Naive thymus-derived CD4-positive, alpha-beta T cell (primary cell): ENCODE measurements at regions of chr19 and their contacts with region 1.

Region 1: GRCh38 chr19:10870955-10871603 is at the start of gene CARM1:
- DNase-seq: peak; percentile 99 to 100 (median 99)
- ATAC-seq: peak; percentile 92
- H3K4me3 ChIP-seq: peak within 1 kb of the TSS; percentile 67
- H3K4me3 Mint-ChIP-seq: peak within 1 kb of the TSS; percentile 79 to 91 (median 86)
- H3K27ac ChIP-seq: peak within 1 kb of the TSS; percentile 74
- H3K27ac Mint-ChIP-seq: peak within 1 kb of the TSS; percentile 74 to 96 (median 88)
- H3K4me1 ChIP-seq: peaks cover 10 to 14% of the 10 kb centered on the region in 2 donors
- H3K4me1 Mint-ChIP-seq: peaks cover 5 to 33% (median 25%) of the 10 kb centered on the region in 7 donors
- H3K27me3 ChIP-seq: no peaks in the 10 kb centered on the region
- H3K27me3 Mint-ChIP-seq: no peaks in the 10 kb centered on the region
- total RNA-seq, gene CARM1: 21.3 to 43.1 (median 27.2) TPM

Region 2: DNA sequence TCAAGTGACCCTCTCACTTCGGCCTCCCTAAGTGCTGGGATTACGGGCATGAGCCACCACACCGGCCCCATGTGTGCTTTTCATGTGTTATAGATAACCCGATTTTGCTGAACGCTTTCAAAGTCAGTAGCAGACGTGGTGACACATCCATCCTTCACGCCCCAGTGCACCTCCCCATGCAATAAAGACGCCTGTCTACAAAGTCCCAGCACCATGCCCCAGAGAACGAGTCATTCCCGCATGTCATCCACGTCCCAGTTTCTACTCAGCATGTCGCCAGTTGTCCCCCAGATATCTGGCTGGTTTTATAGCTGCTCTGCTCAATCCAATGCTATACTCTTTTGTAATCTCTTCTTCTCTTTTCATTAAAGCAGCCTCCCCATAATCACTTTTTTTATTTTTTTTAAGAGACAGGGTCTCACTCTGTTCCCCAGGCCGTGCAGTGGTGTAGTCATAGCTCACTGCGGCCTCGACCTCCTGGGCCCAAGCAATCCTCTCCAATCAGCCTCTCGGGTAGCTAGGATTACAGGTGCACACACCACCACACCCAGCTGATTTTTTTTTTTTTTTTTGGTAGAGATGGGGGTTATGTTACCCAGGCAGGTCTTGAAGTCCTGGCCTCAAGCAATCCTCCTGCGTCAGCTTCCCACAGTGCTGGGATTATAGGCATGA is 110.7 kb before region 1 on chr19:
- CTCF ChIA-PET with region 1: no interaction called
- POLR2A ChIA-PET with region 1: no interaction called
- intact Hi-C with region 1: loop called in 1 of 2 experiments (anchors 2 kb)
- DNase-seq: peak in 1 of 9 donors; percentile 57
- ATAC-seq: no peak
- H3K4me3 ChIP-seq: no peak overlapping the region
- H3K4me3 Mint-ChIP-seq: peak overlapping the region; percentile 60 to 86 (median 82)
- H3K27ac ChIP-seq: peak overlapping the region; percentile 70
- H3K27ac Mint-ChIP-seq: peak overlapping the region; percentile 83 to 99 (median 94)
- H3K4me1 ChIP-seq: peaks cover 62 to 79% of the 10 kb centered on the region in 2 donors
- H3K4me1 Mint-ChIP-seq: peaks cover 69 to 92% (median 84%) of the 10 kb centered on the region in 7 donors
- H3K27me3 ChIP-seq: no peaks in the 10 kb centered on the region
- H3K27me3 Mint-ChIP-seq: peaks cover 0 to 2% (median 0%) of the 10 kb centered on the region in 5 donors

Region 3: DNA sequence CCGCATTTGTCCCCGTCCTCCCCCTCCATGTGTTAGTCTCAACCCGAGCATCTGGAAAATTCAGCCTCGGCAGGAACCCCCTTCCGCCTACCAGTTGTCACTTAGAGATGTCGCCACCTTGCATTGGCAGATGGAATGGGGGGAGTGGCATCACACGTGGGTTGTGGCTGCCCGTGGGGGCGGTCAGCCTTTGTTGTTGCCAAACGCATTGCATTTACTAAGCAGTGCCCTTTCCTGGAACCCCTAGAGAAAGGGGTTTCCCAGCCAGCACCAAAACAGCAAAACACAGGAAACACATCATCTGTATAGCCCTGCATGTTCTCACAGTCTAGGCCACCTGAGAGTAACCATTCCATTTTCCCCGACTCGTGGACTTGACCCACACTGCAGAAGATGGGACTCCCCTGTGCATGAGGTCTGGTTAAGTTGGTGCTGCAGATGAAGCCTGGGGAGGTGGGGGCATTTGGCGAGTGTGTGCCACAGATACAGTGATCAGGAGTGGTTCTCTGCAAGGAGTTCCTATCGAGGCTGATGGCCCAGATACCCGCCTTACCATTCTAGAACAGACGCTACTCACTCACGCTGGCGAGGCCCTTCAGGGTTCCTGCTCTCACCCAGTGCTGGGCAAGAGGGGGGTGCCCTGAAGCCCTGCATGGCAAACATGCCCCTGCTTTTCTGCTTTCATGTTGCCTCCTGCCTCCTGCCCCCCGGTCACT is 73.4 kb before region 1 on chr19:
- CTCF ChIA-PET with region 1: no interaction called
- POLR2A ChIA-PET with region 1: no interaction called
- intact Hi-C with region 1: loop called in 1 of 2 experiments (anchors 1 kb)
- DNase-seq: peak; percentile 27 to 89 (median 64)
- ATAC-seq: peak; percentile 90
- H3K4me3 ChIP-seq: peak overlapping the region; percentile 39
- H3K4me3 Mint-ChIP-seq: peak overlapping the region; percentile 56 to 82 (median 74)
- H3K27ac ChIP-seq: peak overlapping the region; percentile 80
- H3K27ac Mint-ChIP-seq: peak overlapping the region; percentile 93 to 97 (median 94)
- H3K4me1 ChIP-seq: peaks cover 25 to 39% of the 10 kb centered on the region in 2 donors
- H3K4me1 Mint-ChIP-seq: peaks cover 8 to 51% (median 16%) of the 10 kb centered on the region in 7 donors
- H3K27me3 ChIP-seq: no peaks in the 10 kb centered on the region
- H3K27me3 Mint-ChIP-seq: no peaks in the 10 kb centered on the region

Region 4: DNA sequence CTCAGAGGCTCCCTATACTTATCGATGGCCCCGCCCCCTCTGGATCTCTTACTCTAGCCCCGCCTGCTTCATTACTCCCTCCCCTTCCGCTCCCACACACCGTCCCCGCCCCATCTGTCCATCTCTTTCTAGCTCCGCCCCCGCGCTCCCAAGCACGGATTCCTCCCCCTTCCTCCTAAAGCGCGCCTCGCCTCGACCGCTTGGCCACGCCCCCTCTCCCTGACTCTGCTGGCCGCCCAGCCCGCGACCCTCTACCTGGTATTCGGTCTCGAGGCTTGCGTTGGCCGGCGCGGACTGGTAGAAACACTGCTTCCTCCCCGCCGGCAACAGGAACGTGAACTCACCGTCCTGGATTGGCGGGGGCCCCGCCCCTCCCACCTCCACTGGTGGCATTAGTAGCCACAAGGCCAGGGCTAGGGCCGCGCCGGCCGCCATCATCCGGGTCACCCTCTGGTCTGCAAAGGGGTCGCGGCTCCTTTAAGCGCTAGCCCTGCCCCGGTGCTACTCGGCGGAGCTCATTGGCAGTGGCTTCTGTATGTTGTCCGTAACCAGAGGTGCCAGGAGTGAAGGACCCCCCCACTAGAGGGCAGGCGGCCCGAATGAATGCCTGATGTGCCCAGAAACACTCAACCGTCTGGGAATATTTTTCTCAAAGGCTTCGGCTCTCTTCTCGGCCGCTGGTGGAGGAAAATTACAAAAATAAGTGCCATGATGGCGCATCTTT is 35.2 kb before region 1 on chr19 and contains the start of gene TMED1:
- CTCF ChIA-PET with region 1: interaction called, 4 read pairs
- POLR2A ChIA-PET with region 1: interaction called, 7 read pairs
- intact Hi-C with region 1: loop called (anchors 1 kb)
- DNase-seq: peak; percentile 81 to 97 (median 93)
- ATAC-seq: peak; percentile 92
- H3K4me3 ChIP-seq: peak within 1 kb of the TSS; percentile 98
- H3K4me3 Mint-ChIP-seq: peak within 1 kb of the TSS; percentile 82 to 99 (median 96)
- H3K27ac ChIP-seq: peak within 1 kb of the TSS; percentile 93
- H3K27ac Mint-ChIP-seq: peak within 1 kb of the TSS; percentile 98 to 100 (median 99)
- H3K4me1 ChIP-seq: peaks cover 8 to 13% of the 10 kb centered on the region in 2 donors
- H3K4me1 Mint-ChIP-seq: peaks cover 12 to 20% (median 15%) of the 10 kb centered on the region in 7 donors
- H3K27me3 ChIP-seq: no peaks in the 10 kb centered on the region
- H3K27me3 Mint-ChIP-seq: no peaks in the 10 kb centered on the region
- total RNA-seq, gene TMED1: 7.6 to 12.8 (median 9.9) TPM

Region 5: DNA sequence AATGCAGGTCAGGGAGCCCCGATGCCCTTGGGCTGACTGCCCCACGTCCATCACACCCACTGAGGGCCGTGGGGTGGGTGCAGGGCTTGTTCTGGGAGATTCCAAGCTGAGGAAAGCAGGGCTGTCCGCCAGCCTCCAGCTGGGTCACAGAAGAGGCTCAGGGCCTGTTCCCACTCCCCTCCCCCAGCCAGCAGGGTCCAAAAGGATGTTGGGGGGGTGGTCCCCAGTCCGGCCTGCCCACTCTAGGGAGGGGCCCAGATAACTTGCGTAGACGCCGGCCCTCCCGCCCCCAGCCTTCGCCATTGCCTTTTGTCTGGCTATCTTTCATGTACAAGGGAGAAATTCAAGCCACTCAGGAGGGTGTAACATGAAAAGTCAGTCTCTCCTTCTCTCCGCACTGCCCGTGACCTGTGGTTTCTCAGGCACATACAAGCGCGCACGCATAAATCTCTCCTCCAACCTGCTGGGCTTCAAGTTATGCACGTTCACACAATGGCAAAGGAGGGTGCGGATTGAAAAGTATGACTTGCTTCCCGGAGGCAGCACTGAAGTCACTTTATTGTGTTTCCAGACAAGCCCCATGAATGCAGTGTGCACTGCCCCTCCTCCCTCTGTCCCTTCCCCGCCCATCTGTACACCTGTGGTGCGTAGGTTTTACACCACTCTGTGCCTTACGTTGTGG is 20.5 kb after region 1 on chr19:
- CTCF ChIA-PET with region 1: no interaction called
- POLR2A ChIA-PET with region 1: no interaction called
- intact Hi-C with region 1: no loop called
- DNase-seq: no peak
- ATAC-seq: no peak
- H3K4me3 ChIP-seq: no peak overlapping the region
- H3K4me3 Mint-ChIP-seq: no peak overlapping the region
- H3K27ac ChIP-seq: no peak overlapping the region
- H3K27ac Mint-ChIP-seq: peak overlapping the region in 1 of 9 donors; percentile 21
- H3K4me1 ChIP-seq: no peaks in the 10 kb centered on the region
- H3K4me1 Mint-ChIP-seq: peaks cover 8 to 26% (median 12%) of the 10 kb centered on the region in 7 donors
- H3K27me3 ChIP-seq: no peaks in the 10 kb centered on the region
- H3K27me3 Mint-ChIP-seq: no peaks in the 10 kb centered on the region

Region 6: DNA sequence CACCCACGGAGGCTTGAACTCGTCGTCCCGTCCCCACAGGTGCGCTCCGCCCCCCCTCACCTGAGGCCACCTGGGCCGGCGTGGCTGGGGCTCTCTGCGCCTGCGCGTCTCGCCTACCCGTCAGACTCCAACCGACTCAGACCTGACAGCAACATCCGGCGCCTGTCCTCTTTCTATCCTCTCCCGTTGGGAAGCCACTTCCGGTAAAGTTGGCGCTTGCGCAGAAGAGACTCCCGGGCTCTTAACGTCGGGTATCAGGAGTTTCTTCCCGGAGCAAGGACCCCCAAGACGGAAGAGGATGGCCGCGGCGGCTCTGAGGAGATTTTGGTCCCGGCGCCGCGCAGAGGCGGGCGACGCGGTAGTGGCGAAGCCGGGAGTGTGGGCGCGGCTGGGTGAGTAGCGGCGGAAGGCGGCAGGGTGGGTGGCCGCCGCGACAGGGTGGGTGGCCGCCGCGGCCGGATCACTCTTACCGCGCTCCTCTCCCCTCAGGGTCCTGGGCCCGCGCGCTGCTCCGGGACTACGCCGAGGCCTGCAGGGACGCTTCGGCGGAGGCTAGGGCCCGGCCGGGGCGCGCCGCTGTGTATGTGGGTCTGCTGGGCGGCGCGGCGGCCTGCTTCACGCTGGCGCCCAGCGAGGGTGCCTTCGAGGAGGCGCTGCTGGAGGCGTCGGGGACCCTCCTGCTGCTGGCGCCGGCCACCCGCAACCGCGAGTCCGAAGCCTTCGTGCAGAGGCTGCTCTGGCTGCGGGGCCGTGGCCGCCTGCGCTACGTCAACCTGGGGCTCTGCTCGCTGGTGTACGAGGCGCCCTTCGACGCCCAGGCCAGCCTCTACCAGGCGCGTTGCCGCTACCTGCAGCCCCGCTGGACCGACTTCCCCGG is 57.7 kb after region 1 on chr19 and contains the starts of genes TIMM29 and YIPF2:
- CTCF ChIA-PET with region 1: interaction called, 3 read pairs
- POLR2A ChIA-PET with region 1: interaction called, 3 read pairs
- intact Hi-C with region 1: loop called (anchors 1 kb)
- DNase-seq: peak; percentile 76 to 92 (median 88)
- ATAC-seq: peak; percentile 91
- H3K4me3 ChIP-seq: peak within 1 kb of the TSS; percentile 89
- H3K4me3 Mint-ChIP-seq: peak within 1 kb of the TSS; percentile 84 to 96 (median 92)
- H3K27ac ChIP-seq: peak within 1 kb of the TSS; percentile 77
- H3K27ac Mint-ChIP-seq: peak within 1 kb of the TSS; percentile 66 to 93 (median 90)
- H3K4me1 ChIP-seq: peaks cover 14 to 16% of the 10 kb centered on the region in 2 donors
- H3K4me1 Mint-ChIP-seq: peaks cover 12 to 33% (median 26%) of the 10 kb centered on the region in 7 donors
- H3K27me3 ChIP-seq: no peaks in the 10 kb centered on the region
- H3K27me3 Mint-ChIP-seq: no peaks in the 10 kb centered on the region
- total RNA-seq, gene TIMM29: 15.8 to 33.4 (median 24.7) TPM
- total RNA-seq, gene YIPF2: 20.5 to 27.9 (median 26.2) TPM

Region 7: GRCh38 chr19:10960314-10961072 is 89.4 kb after region 1 on chr19 and contains the start of gene SMARCA4:
- CTCF ChIA-PET with region 1: no interaction called
- POLR2A ChIA-PET with region 1: no interaction called
- intact Hi-C with region 1: loop called (anchors 1 kb)
- DNase-seq: peak; percentile 96 to 100 (median 99)
- ATAC-seq: peak; percentile 96
- H3K4me3 ChIP-seq: peak within 1 kb of the TSS; percentile 89
- H3K4me3 Mint-ChIP-seq: peak within 1 kb of the TSS; percentile 84 to 94 (median 90)
- H3K27ac ChIP-seq: peak within 1 kb of the TSS; percentile 89
- H3K27ac Mint-ChIP-seq: peak within 1 kb of the TSS; percentile 79 to 94 (median 93)
- H3K4me1 ChIP-seq: peaks cover 28 to 33% of the 10 kb centered on the region in 2 donors
- H3K4me1 Mint-ChIP-seq: peaks cover 22 to 42% (median 34%) of the 10 kb centered on the region in 7 donors
- H3K27me3 ChIP-seq: no peaks in the 10 kb centered on the region
- H3K27me3 Mint-ChIP-seq: no peaks in the 10 kb centered on the region
- total RNA-seq, gene SMARCA4: 96.0 to 126 (median 104) TPM

Region 8: GRCh38 chr19:11090054-11090900 is 219.2 kb after region 1 on chr19:
- CTCF ChIA-PET with region 1: no interaction called
- POLR2A ChIA-PET with region 1: no interaction called
- intact Hi-C with region 1: loop called (anchors 1 to 2 kb)
- DNase-seq: peak; percentile 89 to 97 (median 96)
- ATAC-seq: peak; percentile 90
- H3K4me3 ChIP-seq: peak overlapping the region; percentile 83
- H3K4me3 Mint-ChIP-seq: peak overlapping the region; percentile 85 to 94 (median 89)
- H3K27ac ChIP-seq: peak overlapping the region; percentile 91
- H3K27ac Mint-ChIP-seq: peak overlapping the region; percentile 88 to 99 (median 96)
- H3K4me1 ChIP-seq: peaks cover 24 to 41% of the 10 kb centered on the region in 2 donors
- H3K4me1 Mint-ChIP-seq: peaks cover 13 to 51% (median 44%) of the 10 kb centered on the region in 7 donors
- H3K27me3 ChIP-seq: no peaks in the 10 kb centered on the region
- H3K27me3 Mint-ChIP-seq: peaks cover 0 to 2% (median 0%) of the 10 kb centered on the region in 5 donors